Activated CD8-positive, alpha-beta memory T cell treated with anti-CD3 and anti-CD28 coated beads, Interleukin-2, amount 10 ng/mL, durations not matched to agents 7 days and 5 days (primary cell): ENCODE measurements at regions of chr15 and their contacts with region 1.

Region 1: GRCh38 chr15:61834076-61834697 is 226.1 kb downstream of the VPS13C start:
- DNase-seq: peak; percentile 78
- ATAC-seq: peak; percentile 74
- H3K4me3 Mint-ChIP-seq: no peak overlapping the region
- H3K27ac Mint-ChIP-seq: no peak overlapping the region
- H3K4me1 Mint-ChIP-seq: peaks cover 24% of the 10 kb centered on the region
- H3K27me3 Mint-ChIP-seq: peaks cover 23% of the 10 kb centered on the region

Region 2: GRCh38 chr15:61163234-61163633 is 671.0 kb before region 1 on chr15:
- CTCF ChIA-PET with region 1: interaction called, 47 read pairs
- DNase-seq: no peak
- ATAC-seq: no peak
- H3K4me3 Mint-ChIP-seq: no peak overlapping the region
- H3K27ac Mint-ChIP-seq: no peak overlapping the region
- H3K4me1 Mint-ChIP-seq: no peaks in the 10 kb centered on the region
- H3K27me3 Mint-ChIP-seq: peaks cover 53% of the 10 kb centered on the region

Region 3: GRCh38 chr15:61169904-61170695 is 664.1 kb before region 1 on chr15:
- CTCF ChIA-PET with region 1: interaction called, 47 read pairs
- DNase-seq: peak; percentile 76
- ATAC-seq: peak; percentile 92
- H3K4me3 Mint-ChIP-seq: peak overlapping the region; percentile 2
- H3K27ac Mint-ChIP-seq: peak overlapping the region; percentile 84
- H3K4me1 Mint-ChIP-seq: peaks cover 24% of the 10 kb centered on the region
- H3K27me3 Mint-ChIP-seq: peaks cover 25% of the 10 kb centered on the region

Region 4: DNA sequence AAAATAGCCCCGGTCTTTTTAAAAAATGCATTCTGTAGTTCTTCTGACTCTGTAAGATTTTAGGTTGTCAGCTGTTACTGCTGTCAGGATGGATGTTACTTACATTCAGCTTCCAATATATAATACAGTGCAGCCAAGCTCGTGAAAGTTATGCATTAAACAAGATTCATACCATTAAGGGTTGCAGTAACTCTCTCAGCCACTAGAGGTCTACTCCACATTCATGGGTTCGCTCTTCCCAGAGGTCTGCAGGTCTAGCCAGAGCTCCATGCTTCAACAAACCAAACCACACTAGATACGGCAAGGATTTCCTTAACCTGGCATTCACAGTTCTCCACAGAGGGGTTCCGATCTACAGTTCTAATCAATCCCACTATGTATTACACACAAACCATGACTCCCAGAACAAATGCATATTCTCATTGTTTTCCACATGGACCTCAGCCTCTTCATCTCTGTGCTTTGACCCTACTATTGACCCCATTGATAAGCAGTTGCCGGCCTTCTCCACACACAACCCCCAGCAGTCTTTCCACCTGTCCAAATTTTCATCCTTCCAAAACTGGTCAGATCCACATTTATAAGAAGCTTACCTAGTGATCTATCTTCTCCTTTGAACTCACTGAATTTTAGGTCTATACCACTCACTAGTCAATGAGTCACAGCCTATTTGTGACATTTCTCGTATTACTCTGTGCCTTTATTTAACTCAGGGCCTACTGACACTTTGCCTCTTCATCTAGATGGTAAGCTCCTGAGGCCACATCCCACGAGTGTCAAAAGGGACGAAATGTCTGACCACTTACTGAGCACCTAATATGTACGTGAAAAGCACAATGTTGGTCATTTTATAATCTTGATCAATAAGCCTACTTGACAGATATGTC is 638.8 kb before region 1 on chr15:
- CTCF ChIA-PET with region 1: interaction called, 10 read pairs
- DNase-seq: no peak
- ATAC-seq: no peak
- H3K4me3 Mint-ChIP-seq: no peak overlapping the region
- H3K27ac Mint-ChIP-seq: no peak overlapping the region
- H3K4me1 Mint-ChIP-seq: no peaks in the 10 kb centered on the region
- H3K27me3 Mint-ChIP-seq: peaks cover 30% of the 10 kb centered on the region

Region 5: DNA sequence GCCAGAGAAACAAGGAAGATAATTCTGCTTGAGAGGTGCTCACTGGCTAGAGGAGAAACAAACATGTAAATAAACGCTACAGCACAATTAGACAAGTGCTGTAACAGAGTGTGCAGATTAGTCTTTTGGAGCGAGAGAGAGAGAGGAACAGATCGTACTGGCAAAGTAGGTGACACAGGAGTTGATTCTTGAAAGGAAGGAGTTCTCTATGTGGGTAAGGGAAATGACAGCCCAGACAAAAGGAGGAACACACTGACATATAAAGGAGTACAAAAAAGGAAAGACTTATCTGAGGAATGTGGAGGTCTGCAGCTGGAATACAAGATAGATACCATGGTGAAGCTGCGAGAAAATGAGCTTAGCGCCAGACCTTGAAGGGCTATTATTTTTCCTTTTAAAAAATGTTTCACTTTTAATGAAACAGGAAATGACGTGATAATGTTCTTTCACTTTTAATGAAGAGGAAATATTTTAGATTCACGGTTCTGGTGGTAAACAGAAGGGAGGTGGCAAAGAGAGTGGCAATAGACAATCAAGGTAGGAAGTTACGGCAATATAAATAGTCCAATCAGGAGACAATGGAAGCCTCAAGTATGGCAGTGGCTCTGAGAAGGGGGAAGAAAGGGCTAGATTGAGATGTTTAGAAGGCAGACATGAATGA is 23.1 kb after region 1 on chr15:
- CTCF ChIA-PET with region 1: interaction called, 19 read pairs
- DNase-seq: no peak
- ATAC-seq: peak; percentile 93
- H3K4me3 Mint-ChIP-seq: no peak overlapping the region
- H3K27ac Mint-ChIP-seq: no peak overlapping the region
- H3K4me1 Mint-ChIP-seq: peaks cover 6% of the 10 kb centered on the region
- H3K27me3 Mint-ChIP-seq: no peaks in the 10 kb centered on the region

Region 6: DNA sequence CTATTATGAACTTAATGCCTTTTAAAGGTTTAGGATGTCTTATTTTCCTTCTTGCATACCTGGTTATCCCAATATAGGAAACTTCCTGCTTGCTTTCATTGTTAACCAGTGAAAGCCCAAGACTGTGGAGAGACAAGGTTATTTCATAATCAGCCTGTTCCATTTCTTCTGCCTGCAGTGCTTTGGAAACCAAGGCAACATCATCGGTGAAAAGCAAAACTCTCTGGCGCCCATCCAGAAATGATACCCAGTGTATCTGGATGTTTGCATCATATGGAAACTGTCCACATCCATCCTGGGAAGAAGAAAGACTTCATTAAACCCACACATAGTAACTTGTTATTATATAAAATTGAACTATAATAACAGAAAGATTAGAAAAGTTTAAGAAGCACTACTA is 55.9 kb after region 1 on chr15:
- CTCF ChIA-PET with region 1: no interaction called
- DNase-seq: peak; percentile 43
- ATAC-seq: no peak
- H3K4me3 Mint-ChIP-seq: no peak overlapping the region
- H3K27ac Mint-ChIP-seq: peak overlapping the region; percentile 70
- H3K4me1 Mint-ChIP-seq: peaks cover 25% of the 10 kb centered on the region
- H3K27me3 Mint-ChIP-seq: no peaks in the 10 kb centered on the region

Region 7: DNA sequence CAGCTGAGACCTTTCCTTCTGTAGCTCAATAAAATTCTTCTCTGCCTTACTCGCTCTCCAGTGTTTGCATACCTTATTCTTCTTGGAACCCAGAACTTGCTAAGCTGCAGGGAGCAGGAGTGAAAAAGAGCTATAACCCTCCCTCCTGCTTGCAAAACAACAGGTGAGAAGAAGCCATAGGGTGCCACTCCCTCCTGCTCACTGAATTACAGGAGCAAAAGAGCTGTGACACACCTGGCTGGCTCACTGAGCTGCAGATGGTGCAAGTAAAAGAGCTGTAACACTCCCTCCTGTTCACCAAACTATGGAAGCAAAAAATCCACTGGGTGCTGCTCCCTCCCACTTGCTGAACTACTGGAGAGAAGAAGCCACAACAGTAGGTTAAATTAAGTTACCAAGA is 375.1 kb after region 1 on chr15:
- CTCF ChIA-PET with region 1: no interaction called
- DNase-seq: no peak
- ATAC-seq: no peak
- H3K4me3 Mint-ChIP-seq: no peak overlapping the region
- H3K27ac Mint-ChIP-seq: no peak overlapping the region
- H3K4me1 Mint-ChIP-seq: peaks cover 8% of the 10 kb centered on the region
- H3K27me3 Mint-ChIP-seq: peaks cover 11% of the 10 kb centered on the region